ENCODE measurements at regions of chr2 and their contacts with region 1.

Region 1: DNA sequence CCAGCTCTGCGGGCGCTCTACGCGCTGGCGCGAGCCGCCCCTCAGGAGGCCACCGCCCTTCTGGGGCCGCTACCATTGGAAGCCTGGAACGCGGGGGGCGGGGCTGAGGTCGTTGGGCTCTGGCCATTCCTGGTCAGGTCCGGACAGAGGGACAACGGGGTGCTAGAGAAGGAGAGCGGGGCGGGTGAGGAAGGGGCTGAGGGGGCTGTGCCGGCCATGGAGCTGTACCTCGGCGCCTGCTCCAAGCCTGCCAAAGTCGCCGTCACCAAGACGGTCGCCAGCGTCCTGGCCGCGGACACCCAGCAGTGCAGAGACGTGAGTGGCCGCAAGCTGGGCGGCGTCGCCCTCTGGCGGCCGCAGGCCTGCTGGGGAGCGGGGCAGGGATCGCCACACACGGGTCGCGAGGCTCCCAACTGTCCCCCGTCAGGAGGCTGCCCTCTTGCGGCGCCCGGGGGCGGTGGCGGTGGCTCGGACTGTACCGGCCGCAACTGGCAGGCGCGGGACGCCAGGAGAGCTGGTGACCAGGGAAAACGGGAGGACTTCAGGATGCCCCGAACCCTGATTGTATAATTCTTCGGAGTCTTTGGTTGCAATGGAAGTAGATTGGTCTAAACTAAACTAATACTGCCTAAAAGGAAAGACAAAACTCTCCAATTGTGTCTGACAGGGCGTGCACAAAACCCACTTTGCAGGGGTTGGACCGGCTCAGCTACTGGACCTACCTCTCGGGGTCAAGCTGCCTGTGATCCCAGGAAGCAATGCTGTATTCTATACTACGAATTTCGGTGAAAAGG is at the start of gene FSIP2:
- DNase-seq: peak; percentile 84
- H3K4me3 ChIP-seq: peak within 1 kb of the TSS; percentile 28 to 50 (median 42)
- H3K27ac ChIP-seq: no peak within 1 kb of the TSS
- H3K4me1 ChIP-seq: peaks cover 2% of the 10 kb centered on the region
- H3K27me3 ChIP-seq: peaks cover 0 to 2% of the 10 kb centered on the region in 2 experiments
- CTCF ChIP-seq: peak; percentile 99 to 100
- POLR2A ChIP-seq: no peak
- total RNA-seq, gene FSIP2: 0.16 and 0.24 TPM in 2 replicates

Region 2: GRCh38 chr2:185291035-185291647 is 447.7 kb before region 1 on chr2:
- CTCF ChIA-PET with region 1: interaction called, 25 read pairs
- POLR2A ChIA-PET with region 1: no interaction called
- dilution Hi-C with region 1: no loop called
- intact Hi-C with region 1: loop called (anchors 1 kb)
- DNase-seq: peak; percentile 47
- H3K4me3 ChIP-seq: no peak overlapping the region
- H3K27ac ChIP-seq: no peak overlapping the region
- H3K4me1 ChIP-seq: no peaks in the 10 kb centered on the region
- H3K27me3 ChIP-seq: no peaks in the 10 kb centered on the region
- CTCF ChIP-seq: peak; percentile 47 to 75
- POLR2A ChIP-seq: no peak

Region 3: GRCh38 chr2:185695711-185696235 is 43.1 kb before region 1 on chr2:
- CTCF ChIA-PET with region 1: no interaction called
- POLR2A ChIA-PET with region 1: no interaction called
- dilution Hi-C with region 1: no loop called
- intact Hi-C with region 1: no loop called
- DNase-seq: no peak
- H3K4me3 ChIP-seq: no peak overlapping the region
- H3K27ac ChIP-seq: no peak overlapping the region
- H3K4me1 ChIP-seq: no peaks in the 10 kb centered on the region
- H3K27me3 ChIP-seq: no peaks in the 10 kb centered on the region
- CTCF ChIP-seq: no peak
- POLR2A ChIP-seq: no peak

Region 4: DNA sequence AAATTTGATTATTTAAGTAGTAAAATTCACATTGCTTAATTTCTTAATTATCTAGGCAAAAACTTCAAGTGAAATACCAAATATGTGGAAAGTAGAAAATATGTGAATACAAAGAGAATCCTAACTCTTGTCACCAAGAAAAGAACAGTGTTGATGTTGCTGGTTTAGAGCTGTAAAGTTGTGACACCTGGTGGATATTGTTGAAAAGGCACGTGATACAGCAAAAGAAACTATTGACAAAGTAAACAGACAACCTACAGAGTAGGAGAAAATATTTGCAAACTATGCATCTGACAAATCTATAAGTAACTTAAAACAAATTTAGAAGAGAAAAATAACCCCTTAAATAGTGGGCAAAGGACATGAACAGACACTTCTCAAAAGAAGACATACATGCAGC is 721.6 kb after region 1 on chr2:
- CTCF ChIA-PET with region 1: interaction called, 11 read pairs
- POLR2A ChIA-PET with region 1: no interaction called
- dilution Hi-C with region 1: no loop called
- intact Hi-C with region 1: loop called (anchors 2 kb)
- DNase-seq: peak; percentile 39
- H3K4me3 ChIP-seq: no peak overlapping the region
- H3K27ac ChIP-seq: no peak overlapping the region
- H3K4me1 ChIP-seq: no peaks in the 10 kb centered on the region
- H3K27me3 ChIP-seq: no peaks in the 10 kb centered on the region
- CTCF ChIP-seq: peak; percentile 8 to 39
- POLR2A ChIP-seq: no peak

Measured in endothelial cell of umbilical vein (primary cell).